HEK293 (cell line): ENCODE measurements at regions of chr11 and their contacts with region 1.

Region 1: DNA sequence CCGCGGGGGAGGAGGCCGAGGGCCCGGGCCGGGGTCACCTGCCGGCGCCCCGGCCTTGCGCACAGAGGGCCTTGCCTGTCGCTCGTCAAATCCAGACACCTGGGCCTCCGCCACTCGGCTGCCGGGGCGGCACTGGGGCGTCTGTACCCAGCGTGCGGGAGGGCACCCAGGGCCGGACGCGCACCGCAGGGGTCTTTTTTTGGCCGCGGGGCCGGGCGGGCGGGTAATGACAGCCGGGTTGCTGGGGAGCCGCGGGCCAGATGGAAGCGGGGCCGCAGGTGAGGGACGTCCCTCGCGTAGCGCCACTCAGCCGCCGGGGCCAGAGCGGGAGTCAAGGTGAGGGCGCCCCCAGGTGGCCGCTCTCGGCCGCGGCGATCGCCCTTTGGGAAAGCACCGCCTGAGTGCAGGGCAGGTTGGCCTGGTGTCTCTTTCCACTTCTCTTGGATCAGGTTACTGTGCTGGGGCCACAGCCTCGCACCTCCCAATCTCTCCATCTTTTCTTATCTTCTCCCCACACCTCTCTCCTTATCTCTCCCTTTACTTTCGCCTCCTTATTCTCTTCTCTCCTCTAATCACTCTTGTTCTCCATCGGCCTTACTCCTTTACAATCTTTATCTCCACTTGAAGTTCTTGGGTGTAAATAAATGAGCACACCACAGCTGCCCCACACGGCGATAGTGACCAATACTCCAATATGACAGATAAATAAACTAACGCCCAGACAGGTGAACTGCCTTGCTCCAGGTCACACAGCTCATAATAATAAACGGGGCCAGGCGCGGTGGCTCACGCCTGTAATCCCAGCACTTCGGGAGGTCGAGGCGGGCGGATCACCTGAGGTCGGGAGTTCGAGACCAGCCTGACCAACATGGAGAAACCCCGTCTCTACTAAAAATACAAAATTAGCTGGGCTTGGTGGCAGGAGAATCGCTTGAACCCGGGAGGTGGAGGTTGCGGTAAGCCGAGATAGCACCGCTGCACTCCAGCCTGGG is 3.7 kb downstream of the PHLDB1 start:
- H3K4me3 ChIP-seq: no peak overlapping the region
- H3K27ac ChIP-seq: no peak overlapping the region
- H3K4me1 ChIP-seq: no peaks in the 10 kb centered on the region
- CTCF ChIP-seq: peak; percentile 52; the same call in 1 of the 2 replicates

Region 2: DNA sequence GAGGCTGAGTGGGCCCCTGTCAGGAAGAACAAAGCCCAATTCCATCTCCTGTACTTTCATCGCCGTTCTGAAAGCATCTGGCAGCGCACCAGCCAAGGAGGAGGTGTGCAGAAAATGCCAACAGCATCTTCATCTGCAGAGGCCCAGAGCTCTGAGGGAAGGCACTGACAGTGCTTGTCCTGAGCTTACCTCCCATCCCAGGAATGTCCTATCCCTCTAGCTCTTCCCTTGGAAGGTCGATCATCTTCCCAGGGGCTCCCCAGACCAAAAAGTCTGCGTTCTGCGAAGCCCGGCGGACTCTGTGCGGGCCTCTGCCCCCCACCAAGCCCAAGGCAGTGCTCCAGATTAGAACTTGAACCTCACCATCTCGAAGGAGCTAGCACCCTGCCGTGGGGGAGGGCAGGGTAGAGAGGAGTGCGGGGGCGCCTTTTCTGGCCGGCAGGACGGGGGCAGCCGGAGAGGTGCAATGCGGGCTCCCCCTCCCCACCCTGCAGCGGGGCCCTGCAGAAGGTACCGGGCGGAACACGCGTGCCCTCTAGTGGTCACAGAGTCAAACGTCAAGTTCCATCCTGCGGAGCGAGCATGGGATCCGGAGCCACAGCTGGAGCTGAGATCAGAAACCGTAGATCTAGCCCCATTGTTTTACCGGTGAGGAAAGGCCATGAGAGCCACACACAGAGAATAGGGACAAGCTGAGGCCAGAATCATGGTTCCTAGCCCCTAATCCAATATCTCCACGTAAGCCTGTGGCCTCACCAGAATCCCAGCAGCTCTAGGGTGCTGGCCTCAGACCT is 439.6 kb before region 1 on chr11:
- CTCF ChIA-PET with region 1: no interaction called
- POLR2A ChIA-PET with region 1: interaction called, 10 read pairs
- H3K4me3 ChIP-seq: no peak overlapping the region
- H3K27ac ChIP-seq: no peak overlapping the region
- H3K4me1 ChIP-seq: no peaks in the 10 kb centered on the region
- CTCF ChIP-seq: peak; percentile 80

Region 3: DNA sequence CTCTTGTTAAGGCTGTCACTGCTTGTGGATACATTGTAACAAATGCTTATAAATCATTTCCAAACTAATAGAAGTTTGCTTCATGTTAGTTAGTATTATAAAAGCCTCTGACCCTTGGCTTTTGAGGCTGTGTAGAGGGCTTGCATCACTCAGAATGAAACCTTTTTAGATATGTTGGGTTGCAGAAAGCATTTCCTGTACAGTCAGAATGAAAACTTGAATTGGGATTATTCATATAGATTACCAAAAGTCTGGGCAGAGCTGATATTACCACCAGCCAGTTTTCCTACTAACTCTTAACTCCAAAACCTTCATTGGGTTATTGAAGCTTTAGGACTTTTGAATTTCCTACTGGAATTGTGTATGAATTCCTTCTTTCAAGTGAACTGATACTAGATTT is 162.8 kb before region 1 on chr11:
- CTCF ChIA-PET with region 1: no interaction called
- POLR2A ChIA-PET with region 1: no interaction called
- H3K4me3 ChIP-seq: no peak overlapping the region
- H3K27ac ChIP-seq: no peak overlapping the region
- H3K4me1 ChIP-seq: no peaks in the 10 kb centered on the region
- CTCF ChIP-seq: no peak

Region 4: DNA sequence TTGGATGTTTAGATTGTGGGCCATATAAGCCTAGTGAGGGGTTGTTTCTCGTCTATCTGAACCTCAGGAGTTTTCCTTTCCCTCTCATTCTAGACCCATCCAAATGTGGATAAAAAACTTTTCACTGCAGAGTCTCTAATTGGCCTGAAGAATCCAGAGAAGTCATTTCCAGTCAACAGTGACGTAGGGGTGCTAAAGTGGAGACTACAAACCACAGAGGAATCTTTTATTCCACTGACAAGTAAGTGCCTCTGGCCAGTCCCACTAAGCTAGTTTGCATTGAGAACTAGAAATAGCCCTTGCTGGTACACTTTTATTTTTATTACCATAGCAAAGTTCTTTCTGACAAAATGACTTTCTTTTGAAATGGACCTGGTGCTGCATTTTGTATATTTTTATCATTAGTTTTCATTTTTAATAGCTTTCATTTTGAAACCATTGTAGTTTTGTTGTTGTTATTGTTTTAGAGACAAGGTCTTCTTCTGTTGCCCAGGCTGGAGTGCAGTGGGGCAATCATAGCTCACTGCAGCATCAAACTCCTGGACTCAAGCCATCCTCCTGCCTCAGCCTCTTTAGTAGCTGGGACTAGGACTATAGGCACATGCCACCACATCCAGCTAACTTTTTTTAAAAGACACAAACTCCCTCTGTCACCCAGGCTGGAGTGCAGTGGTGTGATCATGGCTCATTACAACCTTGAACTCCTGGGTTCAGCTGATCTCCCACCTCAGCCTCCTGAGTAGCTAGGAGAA is 18.3 kb before region 1 on chr11:
- CTCF ChIA-PET with region 1: interaction called, 16 read pairs
- POLR2A ChIA-PET with region 1: no interaction called
- H3K4me3 ChIP-seq: no peak overlapping the region
- H3K27ac ChIP-seq: no peak overlapping the region
- H3K4me1 ChIP-seq: no peaks in the 10 kb centered on the region
- CTCF ChIP-seq: no peak

Region 5: GRCh38 chr11:118621071-118621783 is 10.1 kb after region 1 on chr11:
- CTCF ChIA-PET with region 1: interaction called, 31 read pairs
- POLR2A ChIA-PET with region 1: interaction called, 72 read pairs
- H3K4me3 ChIP-seq: peak overlapping the region; percentile 64
- H3K27ac ChIP-seq: peak overlapping the region; percentile 22; the same call in 1 of the 2 replicates
- H3K4me1 ChIP-seq: peaks cover 9% of the 10 kb centered on the region
- CTCF ChIP-seq: no peak

Region 6: GRCh38 chr11:118634431-118635236 is 23.5 kb after region 1 on chr11:
- CTCF ChIA-PET with region 1: interaction called, 7 read pairs
- POLR2A ChIA-PET with region 1: interaction called, 15 read pairs
- H3K4me3 ChIP-seq: 0 out of 2 replicates have a peak overlapping the region, but pooled peaks have one; percentile 1
- H3K27ac ChIP-seq: no peak overlapping the region
- H3K4me1 ChIP-seq: peaks cover 7% of the 10 kb centered on the region; the same call in 1 of the 2 replicates
- CTCF ChIP-seq: peak; percentile 29

Region 7: GRCh38 chr11:118659314-118659952 is 48.3 kb after region 1 on chr11:
- CTCF ChIA-PET with region 1: interaction called, 41 read pairs
- POLR2A ChIA-PET with region 1: interaction called, 3 read pairs
- H3K4me3 ChIP-seq: no peak overlapping the region
- H3K27ac ChIP-seq: no peak overlapping the region
- H3K4me1 ChIP-seq: no peaks in the 10 kb centered on the region
- CTCF ChIP-seq: peak; percentile 82